ENCODE measurements at regions of chr9 and their contacts with region 1.

Region 1: DNA sequence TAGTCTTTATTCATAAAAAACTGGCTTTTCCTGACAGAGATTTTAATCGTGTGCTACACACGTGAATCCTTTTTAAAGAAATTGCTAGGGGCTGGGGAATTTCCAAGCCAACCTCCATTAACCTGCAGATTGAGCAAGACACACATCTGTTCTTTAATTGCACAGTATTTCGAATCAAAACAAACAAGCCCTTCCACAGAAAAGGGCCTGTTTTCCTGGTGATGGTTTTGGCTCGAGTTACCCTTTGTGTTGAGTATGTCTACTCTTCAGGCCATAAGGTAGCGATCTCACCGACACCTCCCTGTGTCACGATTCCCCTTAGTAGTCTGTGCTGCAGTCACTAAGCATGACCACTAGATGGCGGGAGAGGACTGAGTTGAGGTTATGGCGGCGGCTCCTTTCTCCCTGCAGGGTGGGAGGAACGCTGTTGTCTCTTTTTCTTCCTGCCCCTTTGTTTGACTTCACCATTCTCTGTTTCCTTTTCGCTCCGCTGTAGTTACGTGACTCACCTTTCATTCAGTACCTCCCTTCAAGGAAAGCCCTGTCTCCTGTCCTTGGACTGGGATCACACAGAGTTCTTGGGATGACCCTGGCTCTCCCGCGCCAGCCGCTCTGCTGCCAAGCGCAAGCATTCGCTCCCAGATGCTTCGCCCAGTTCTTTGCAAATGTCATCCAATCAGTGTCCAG is 137.1 kb upstream of the SLC24A2 start:
- DNase-seq: peak; percentile 80

Region 2: GRCh38 chr9:20356403-20357035 is 430.6 kb after region 1 on chr9:
- intact Hi-C with region 1: loop called (anchors 1 kb)
- DNase-seq: no peak

Region 3: GRCh38 chr9:20941174-20941690 is 1015.3 kb after region 1 on chr9:
- intact Hi-C with region 1: loop called (anchors 2 kb)
- DNase-seq: no peak

Region 4: GRCh38 chr9:21102305-21102704 is 1176.3 kb after region 1 on chr9:
- intact Hi-C with region 1: loop called (anchors 5 kb)
- DNase-seq: no peak